Activated CD8-positive, alpha-beta T cell treated with anti-CD3 and anti-CD28 coated beads, Interleukin-2, amount 10 ng/mL, durations not matched to agents 7 days and 5 days (primary cell): ENCODE measurements at regions of chr7 and their contacts with region 1.

Region 1: GRCh38 chr7:115008465-115009114 is 86.7 kb downstream of the MDFIC start:
- DNase-seq: peak; percentile 43
- ATAC-seq: peak; percentile 64
- H3K4me3 Mint-ChIP-seq: peak overlapping the region; percentile 72
- H3K27ac Mint-ChIP-seq: peak overlapping the region; percentile 96
- H3K4me1 Mint-ChIP-seq: peaks cover 72% of the 10 kb centered on the region
- H3K27me3 Mint-ChIP-seq: no peaks in the 10 kb centered on the region

Region 2: DNA sequence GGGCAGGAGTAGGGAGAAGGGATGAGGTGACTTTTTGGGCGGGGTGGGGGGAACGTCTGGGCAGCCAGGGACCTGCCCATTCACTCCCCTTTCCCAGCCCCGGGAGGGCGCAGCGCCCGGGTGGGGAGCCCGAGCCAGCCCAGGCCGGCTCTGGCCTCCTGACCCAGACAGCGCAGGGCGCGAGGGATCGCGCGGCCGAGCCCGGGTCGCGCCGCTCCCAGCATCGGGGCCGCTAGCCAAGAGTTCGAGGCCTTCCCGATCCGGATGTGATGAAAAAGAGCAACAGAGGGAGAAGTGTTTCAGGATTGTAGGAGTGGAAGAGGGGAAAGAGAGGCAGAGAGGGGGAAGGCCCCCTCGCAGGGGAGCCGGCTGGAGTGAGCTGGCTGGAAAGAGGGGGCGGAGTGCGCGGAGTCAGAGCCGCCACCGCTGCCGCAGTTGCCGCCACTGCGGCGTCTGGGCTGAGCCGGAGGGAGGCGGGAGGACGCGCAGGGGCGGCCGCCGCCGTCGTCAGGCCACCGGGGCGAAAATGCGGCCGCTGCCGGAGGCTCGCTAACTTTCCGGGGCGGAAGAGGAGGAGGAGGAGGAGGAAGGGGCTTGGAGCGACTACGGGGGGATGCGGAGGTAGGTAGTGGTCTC is 86.5 kb before region 1 on chr7 and contains the start of gene MDFIC:
- CTCF ChIA-PET with region 1: interaction called, 15 read pairs
- POLR2A ChIA-PET with region 1: interaction called, 19 read pairs
- DNase-seq: peak; percentile 62
- ATAC-seq: peak; percentile 66
- H3K4me3 Mint-ChIP-seq: peak within 1 kb of the TSS; percentile 97
- H3K27ac Mint-ChIP-seq: peak within 1 kb of the TSS; percentile 97
- H3K4me1 Mint-ChIP-seq: peaks cover 37% of the 10 kb centered on the region
- H3K27me3 Mint-ChIP-seq: no peaks in the 10 kb centered on the region
- total RNA-seq, gene MDFIC: 63.6 to 69.8 TPM